Activated B cell treated with CpG ODN at 0.5 μM for 24 hours (primary cell): ENCODE measurements at regions of chr12 and their contacts with region 1.

Region 1: GRCh38 chr12:93167841-93168492 is 209.8 kb upstream of the NUDT4 start:
- DNase-seq: no peak
- ATAC-seq: peak; percentile 80
- H3K4me3 Mint-ChIP-seq: peak overlapping the region; percentile 80
- H3K27ac Mint-ChIP-seq: peak overlapping the region; percentile 80
- H3K4me1 Mint-ChIP-seq: peaks cover 60% of the 10 kb centered on the region
- H3K27me3 Mint-ChIP-seq: no peaks in the 10 kb centered on the region
- CTCF ChIP-seq: no peak

Region 2: DNA sequence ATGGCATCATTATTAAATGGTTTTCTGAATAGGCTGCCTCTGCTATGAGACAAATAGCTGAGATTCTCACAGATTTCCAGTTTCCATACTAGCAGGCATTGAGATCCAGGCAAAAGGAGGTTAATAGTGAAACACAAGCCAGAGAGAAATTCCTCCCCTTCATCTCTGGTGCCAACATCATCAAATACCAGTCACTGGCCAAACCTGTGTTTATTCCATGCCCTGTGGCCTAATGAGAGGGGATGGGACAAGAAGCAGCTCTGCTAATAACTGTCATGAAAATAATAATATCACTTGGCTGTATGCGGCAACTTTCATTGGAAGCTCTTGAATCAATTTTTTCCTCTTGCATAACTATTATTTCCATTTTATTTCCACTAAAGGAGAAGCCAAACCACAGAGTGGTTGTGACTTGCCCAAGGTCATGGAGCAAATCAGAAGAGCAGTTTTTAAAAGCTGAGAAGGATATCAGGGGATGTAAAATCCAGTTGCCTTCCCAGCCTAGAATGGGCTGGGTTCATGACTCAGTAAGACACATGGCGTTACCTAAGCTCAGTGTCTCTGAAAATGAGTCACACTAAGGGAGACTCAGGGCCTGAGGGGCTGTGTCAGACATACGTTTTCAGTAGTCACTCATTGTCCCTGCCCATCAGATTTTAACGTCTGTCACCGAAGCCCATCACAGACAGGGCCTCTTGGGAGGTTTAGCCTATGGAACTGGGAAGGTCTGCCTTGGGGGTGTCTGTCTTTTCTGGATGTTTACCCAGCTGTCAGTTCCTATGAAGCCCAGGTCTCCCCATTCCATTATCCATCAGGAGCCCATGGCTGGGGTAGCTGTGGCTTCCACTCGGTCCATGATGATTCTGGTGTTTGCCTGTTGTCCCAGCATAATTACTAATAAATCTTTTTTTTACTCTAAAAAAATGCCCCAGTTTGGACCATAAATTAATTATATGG is 30.0 kb before region 1 on chr12:
- CTCF ChIA-PET with region 1: interaction called, 6 read pairs
- POLR2A ChIA-PET with region 1: interaction called, 16 read pairs
- intact Hi-C with region 1: loop called (anchors 1 kb)
- DNase-seq: no peak
- ATAC-seq: peak; percentile 40
- H3K4me3 Mint-ChIP-seq: peak overlapping the region; percentile 13
- H3K27ac Mint-ChIP-seq: peak overlapping the region; percentile 85
- H3K4me1 Mint-ChIP-seq: peaks cover 62% of the 10 kb centered on the region
- H3K27me3 Mint-ChIP-seq: no peaks in the 10 kb centered on the region
- CTCF ChIP-seq: no peak

Region 3: DNA sequence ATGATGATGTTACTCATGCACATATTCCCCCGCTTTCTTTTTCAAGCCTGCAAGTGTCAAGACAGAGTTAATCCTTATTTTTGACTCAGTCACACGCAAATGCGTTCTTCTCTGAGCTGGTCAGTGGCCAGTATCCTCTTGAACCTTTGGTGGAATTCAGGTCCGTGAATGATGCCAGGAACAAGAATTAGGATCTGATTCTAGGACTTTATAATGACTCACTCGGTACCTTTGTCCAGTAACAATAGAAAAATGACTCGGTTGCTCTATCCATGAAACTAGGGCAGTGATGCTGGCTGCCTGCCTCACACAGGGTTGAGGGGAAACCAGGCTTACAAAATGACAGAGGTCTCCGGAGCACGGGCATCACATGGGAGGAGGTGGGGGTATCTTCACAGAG is 24.0 kb after region 1 on chr12:
- CTCF ChIA-PET with region 1: no interaction called
- POLR2A ChIA-PET with region 1: no interaction called
- intact Hi-C with region 1: no loop called
- DNase-seq: no peak
- ATAC-seq: no peak
- H3K4me3 Mint-ChIP-seq: no peak overlapping the region
- H3K27ac Mint-ChIP-seq: no peak overlapping the region
- H3K4me1 Mint-ChIP-seq: no peaks in the 10 kb centered on the region
- H3K27me3 Mint-ChIP-seq: no peaks in the 10 kb centered on the region
- CTCF ChIP-seq: no peak

Region 4: DNA sequence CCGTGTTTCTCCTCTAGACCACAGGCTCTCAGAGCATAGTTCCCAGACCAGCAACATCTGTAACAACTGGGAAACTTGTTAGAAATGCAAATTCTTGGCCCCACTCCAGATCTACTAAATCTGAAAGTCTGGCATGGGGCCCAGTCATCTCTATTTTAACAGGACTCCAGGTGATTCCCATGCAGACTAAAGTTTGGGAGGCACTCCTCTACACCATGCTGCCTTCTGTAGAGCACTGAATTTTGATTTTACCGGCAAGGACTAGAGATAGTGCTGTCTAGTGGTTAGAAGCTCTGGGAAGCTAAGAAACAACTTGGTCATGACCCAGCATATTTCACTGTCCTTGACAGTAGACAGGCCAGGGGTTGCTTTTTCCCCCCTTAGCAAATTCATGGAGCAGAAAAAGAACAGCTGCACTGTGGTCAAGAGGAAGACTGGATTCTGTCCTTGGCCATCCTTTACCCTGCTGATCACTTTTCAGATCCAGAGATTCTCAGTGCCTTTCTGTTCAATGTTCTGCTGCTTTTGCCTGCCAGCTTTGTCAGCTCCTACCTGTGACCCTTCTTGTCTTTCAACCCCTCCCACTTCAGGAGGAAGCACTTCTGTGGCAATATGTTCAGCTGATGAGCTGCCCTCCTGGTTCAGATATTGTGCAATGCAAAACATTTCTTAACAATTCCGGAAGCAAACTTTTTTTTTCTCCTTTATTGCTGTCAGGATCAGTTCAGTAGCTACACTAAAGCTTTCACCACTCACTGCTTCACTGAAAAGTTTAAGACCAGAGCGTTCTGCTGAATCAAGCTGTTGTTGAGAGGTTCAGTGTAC is 75.9 kb after region 1 on chr12:
- CTCF ChIA-PET with region 1: no interaction called
- POLR2A ChIA-PET with region 1: no interaction called
- intact Hi-C with region 1: loop called (anchors 5 kb)
- DNase-seq: no peak
- ATAC-seq: peak; percentile 18
- H3K4me3 Mint-ChIP-seq: peak overlapping the region; percentile 15
- H3K27ac Mint-ChIP-seq: no peak overlapping the region
- H3K4me1 Mint-ChIP-seq: peaks cover 36% of the 10 kb centered on the region
- H3K27me3 Mint-ChIP-seq: no peaks in the 10 kb centered on the region
- CTCF ChIP-seq: no peak